ENCODE measurements at regions of chr10 and their contacts with region 1.

Region 1: GRCh38 chr10:102641880-102642735 is 2.2 kb upstream of the TRIM8 start:
- DNase-seq: peak; percentile 99
- H3K4me3 Mint-ChIP-seq: peak overlapping the region; percentile 83
- H3K27ac Mint-ChIP-seq: peak overlapping the region; percentile 88
- H3K4me1 Mint-ChIP-seq: peaks cover 18% of the 10 kb centered on the region
- H3K27me3 Mint-ChIP-seq: no peaks in the 10 kb centered on the region

Region 2: DNA sequence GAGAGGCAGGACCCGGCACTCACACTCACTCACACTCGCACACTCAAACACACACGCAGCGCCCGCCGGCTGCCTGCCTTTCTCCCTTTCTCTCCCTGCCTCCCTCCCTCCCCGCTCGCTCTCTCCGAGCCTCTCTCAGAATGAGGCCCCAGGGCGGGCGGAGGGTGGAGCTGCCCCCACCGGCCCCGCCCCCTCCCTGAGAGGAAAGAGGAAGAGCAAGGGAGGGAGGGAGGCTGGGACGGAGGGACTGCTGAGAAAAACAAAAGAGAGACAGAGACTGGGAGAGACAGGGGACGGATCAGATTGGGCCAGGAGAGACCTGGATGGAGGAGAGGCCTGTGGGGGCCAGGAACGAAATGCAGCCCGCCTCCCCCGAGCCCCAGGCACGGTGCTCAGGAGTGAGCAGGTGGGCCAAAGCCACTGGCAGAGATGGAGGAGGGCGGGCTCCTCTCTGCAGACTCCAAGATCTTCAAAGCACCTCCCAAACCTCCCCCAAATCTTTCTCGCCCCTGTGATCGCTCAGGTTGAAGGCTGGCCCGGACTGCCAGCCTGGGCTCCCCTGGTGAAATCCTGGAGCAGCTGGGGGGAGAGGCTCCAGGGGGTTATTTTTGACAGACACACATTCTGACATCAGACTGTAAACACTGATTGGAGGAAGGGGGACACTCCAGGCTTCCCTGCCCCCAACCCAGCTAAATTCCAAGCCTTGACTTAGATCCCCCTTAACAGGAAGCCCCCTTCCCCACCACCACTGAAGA is 527.1 kb before region 1 on chr10:
- CTCF ChIA-PET with region 1: no interaction called
- intact Hi-C with region 1: loop called (anchors 5 kb)
- DNase-seq: peak; percentile 92
- H3K4me3 Mint-ChIP-seq: peak overlapping the region; percentile 93
- H3K27ac Mint-ChIP-seq: peak overlapping the region; percentile 98
- H3K4me1 Mint-ChIP-seq: peaks cover 53% of the 10 kb centered on the region
- H3K27me3 Mint-ChIP-seq: no peaks in the 10 kb centered on the region

Region 3: GRCh38 chr10:102432162-102432950 is 209.8 kb before region 1 on chr10 and contains the start of gene CUEDC2:
- CTCF ChIA-PET with region 1: no interaction called
- intact Hi-C with region 1: loop called (anchors 2 kb)
- DNase-seq: peak; percentile 99
- H3K4me3 Mint-ChIP-seq: peak within 1 kb of the TSS; percentile 90
- H3K27ac Mint-ChIP-seq: peak within 1 kb of the TSS; percentile 92
- H3K4me1 Mint-ChIP-seq: peaks cover 47% of the 10 kb centered on the region
- H3K27me3 Mint-ChIP-seq: no peaks in the 10 kb centered on the region
- total RNA-seq, gene CUEDC2: 63.3 to 64.4 TPM

Region 4: DNA sequence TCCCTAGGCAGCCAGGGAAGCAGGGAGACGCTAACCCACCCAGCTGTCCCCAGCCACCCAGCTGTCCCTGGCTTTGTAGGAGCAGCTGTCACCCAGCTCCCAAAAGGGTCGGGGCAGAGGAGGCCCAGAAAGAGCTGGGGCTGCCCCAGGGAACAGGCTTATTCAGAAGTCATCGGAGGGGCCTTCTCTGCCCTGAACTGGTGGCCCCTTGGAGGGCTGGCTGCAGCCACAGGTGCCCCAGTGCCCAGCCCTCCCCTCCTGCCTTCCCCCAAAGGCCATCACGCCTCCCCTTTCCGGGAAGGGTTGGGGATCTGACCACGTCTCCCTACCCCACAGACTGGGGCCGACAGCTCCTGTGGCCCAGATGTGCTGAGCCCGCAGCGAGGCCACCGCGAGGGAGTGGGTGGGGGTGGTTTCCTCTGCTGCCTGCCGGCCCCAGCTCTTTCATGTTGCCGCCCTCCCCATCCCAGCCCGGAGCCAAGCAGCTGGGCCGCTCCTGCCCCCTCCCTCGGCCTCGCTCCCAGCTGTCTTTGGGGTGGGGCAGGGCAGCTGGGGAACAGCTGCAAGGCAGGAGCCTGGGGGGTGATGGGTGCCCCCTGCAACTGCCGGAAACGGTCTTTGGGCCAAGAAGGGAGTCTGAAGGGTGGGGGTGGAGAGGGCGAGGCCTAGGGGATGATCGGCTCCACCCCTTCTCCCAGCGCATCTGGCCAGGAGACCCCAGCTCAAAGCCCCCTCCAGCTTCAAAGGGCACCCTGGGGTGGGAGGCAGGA is 19.0 kb after region 1 on chr10:
- CTCF ChIA-PET with region 1: interaction called, 10 read pairs
- intact Hi-C with region 1: loop called (anchors 1 kb)
- DNase-seq: peak; percentile 76
- H3K4me3 Mint-ChIP-seq: peak overlapping the region; percentile 6
- H3K27ac Mint-ChIP-seq: no peak overlapping the region
- H3K4me1 Mint-ChIP-seq: peaks cover 35% of the 10 kb centered on the region
- H3K27me3 Mint-ChIP-seq: no peaks in the 10 kb centered on the region

Region 5: GRCh38 chr10:102743588-102744373 is 101.7 kb after region 1 on chr10 and contains the start of gene WBP1L:
- CTCF ChIA-PET with region 1: no interaction called
- intact Hi-C with region 1: loop called (anchors 1 kb)
- DNase-seq: peak; percentile 97
- H3K4me3 Mint-ChIP-seq: peak within 1 kb of the TSS; percentile 90
- H3K27ac Mint-ChIP-seq: peak within 1 kb of the TSS; percentile 83
- H3K4me1 Mint-ChIP-seq: peaks cover 43% of the 10 kb centered on the region
- H3K27me3 Mint-ChIP-seq: no peaks in the 10 kb centered on the region
- total RNA-seq, gene WBP1L: 10.5 to 11.8 TPM

Region 6: DNA sequence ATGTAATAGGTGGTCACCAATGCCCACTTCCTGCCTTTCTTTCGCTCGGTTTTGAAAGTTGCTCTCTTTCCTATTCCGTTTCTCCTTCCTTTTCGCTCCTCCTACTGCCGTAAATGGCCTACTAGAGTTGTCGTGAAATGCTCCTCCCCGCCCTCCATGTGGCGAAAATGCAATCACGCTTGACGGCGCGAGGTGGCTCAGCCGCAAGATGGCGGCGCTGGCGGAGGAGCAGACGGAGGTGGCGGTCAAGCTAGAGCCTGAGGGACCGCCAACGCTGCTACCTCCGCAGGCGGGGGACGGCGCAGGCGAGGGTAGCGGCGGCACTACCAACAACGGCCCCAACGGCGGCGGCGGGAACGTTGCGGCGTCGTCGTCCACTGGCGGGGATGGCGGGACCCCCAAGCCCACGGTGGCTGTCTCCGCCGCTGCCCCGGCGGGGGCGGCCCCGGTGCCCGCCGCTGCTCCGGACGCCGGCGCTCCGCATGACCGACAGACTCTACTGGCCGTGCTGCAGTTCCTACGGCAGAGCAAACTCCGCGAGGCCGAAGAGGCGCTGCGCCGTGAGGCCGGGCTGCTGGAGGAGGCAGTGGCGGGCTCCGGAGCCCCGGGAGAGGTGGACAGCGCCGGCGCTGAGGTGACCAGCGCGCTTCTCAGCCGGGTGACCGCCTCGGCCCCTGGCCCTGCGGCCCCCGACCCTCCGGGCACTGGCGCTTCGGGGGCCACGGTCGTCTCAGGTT is 725.8 kb after region 1 on chr10 and contains the start of gene TAF5:
- CTCF ChIA-PET with region 1: no interaction called
- intact Hi-C with region 1: loop called (anchors 10 kb)
- DNase-seq: peak; percentile 95
- H3K4me3 Mint-ChIP-seq: peak within 1 kb of the TSS; percentile 85
- H3K27ac Mint-ChIP-seq: peak within 1 kb of the TSS; percentile 87
- H3K4me1 Mint-ChIP-seq: peaks cover 18% of the 10 kb centered on the region
- H3K27me3 Mint-ChIP-seq: no peaks in the 10 kb centered on the region
- total RNA-seq, gene TAF5: 16.3 TPM

Region 7: GRCh38 chr10:103481974-103482531 is 839.9 kb after region 1 on chr10:
- CTCF ChIA-PET with region 1: no interaction called
- intact Hi-C with region 1: no loop called
- DNase-seq: peak; percentile 41
- H3K4me3 Mint-ChIP-seq: no peak overlapping the region
- H3K27ac Mint-ChIP-seq: no peak overlapping the region
- H3K4me1 Mint-ChIP-seq: no peaks in the 10 kb centered on the region
- H3K27me3 Mint-ChIP-seq: no peaks in the 10 kb centered on the region

Measured in activated naive CD4-positive, alpha-beta T cell treated with anti-CD3 and anti-CD28 coated beads for 36 hours (primary cell).